Esophagus squamous epithelium (tissue), 5 donors: ENCODE measurements at regions of chr1 and their contacts with region 1.

Region 1: GRCh38 chr1:224113918-224114786 is at the start of gene FBXO28:
- DNase-seq: peak; percentile 60
- H3K4me3 ChIP-seq: peak within 1 kb of the TSS; percentile 53 to 97 (median 79)
- H3K27ac ChIP-seq: peak within 1 kb of the TSS; percentile 89 to 98 (median 94)
- H3K4me1 ChIP-seq: peaks cover 5 to 41% (median 23%) of the 10 kb centered on the region in 3 donors
- H3K27me3 ChIP-seq: peaks cover 0 to 20% (median 0%) of the 10 kb centered on the region in 4 donors
- CTCF ChIP-seq: no peak
- POLR2A ChIP-seq: peak in 3 of 4 donors; percentile 75 to 92 (median 87)
- total RNA-seq, gene FBXO28: 25.2 to 34.3 (median 31.5) TPM

Region 2: DNA sequence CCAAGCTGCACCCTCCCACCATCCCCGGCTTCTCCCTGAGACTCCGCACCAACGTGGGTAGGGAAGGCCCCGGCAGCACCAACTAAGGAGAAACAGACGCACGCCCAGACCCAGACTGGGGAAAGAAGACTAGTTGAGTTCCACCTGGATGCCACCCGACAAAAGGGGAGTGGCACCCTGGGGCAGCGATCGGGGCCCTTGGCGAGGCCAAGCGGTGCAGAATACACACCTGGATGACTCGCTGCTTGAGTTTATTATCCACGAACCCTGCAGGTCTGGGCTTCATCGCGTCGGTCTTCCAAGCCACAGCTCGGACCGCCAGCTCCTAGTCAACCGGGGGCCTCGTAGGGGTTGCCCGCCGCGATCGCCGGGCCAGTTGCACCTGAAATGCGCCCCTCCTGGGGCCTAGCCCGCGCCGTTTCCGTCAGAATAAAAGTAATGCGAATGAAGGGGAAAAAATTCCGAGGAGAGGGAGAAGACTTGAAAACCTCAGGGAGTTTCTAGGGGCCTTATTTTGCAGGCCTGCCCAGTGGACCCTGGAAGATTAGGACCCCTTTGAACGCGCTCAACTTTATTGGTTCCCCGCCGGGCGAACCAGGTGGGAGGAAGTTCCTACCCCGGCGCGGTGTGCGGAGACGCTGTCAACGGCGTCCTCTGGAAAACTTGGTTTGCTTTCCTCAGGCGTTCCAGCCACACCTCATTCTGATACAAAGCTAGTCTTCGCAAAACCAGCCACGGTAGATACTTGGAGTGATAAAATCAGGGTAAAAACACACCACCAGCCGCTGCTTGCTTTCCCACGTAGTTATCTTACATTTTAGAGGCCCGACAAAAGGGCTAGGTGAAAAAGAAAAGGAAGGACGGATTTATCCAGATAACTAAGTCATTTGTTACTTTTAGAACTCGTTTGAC is 215.9 kb after region 1 on chr1 and contains the start of gene NVL:
- intact Hi-C with region 1: loop called (anchors 10 kb)
- DNase-seq: peak; percentile 24
- H3K4me3 ChIP-seq: peak within 1 kb of the TSS; percentile 78 to 94 (median 80)
- H3K27ac ChIP-seq: peak within 1 kb of the TSS; percentile 89 to 97 (median 94)
- H3K4me1 ChIP-seq: peaks cover 8 to 37% (median 13%) of the 10 kb centered on the region in 3 donors
- H3K27me3 ChIP-seq: no peaks in the 10 kb centered on the region
- CTCF ChIP-seq: peak in 1 of 6 experiments; percentile 25
- POLR2A ChIP-seq: peak in 2 of 4 donors; percentile 10 to 59
- total RNA-seq, gene NVL: 10.5 to 27.7 (median 22.0) TPM